Naive thymus-derived CD4-positive, alpha-beta T cell (primary cell): ENCODE measurements at regions of chr9 and their contacts with region 1.

Region 1: DNA sequence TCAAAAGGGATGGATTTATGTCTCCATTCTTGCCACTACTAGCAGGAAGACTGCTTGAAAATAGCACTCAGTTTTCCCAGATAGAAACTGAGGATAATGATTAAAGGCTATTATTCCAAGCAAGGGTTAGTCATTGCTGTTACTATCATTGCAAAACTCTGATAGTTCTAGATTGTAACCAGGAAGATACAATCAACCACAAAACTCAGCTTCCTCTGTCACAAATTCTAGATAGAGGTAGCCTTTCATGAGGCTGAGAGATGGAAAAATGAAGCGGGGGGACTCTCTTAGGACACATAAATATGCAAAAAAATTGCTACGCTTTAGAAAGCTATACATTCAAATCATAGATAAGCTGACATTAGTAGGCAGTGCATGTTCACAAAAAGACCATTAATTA is 3.1 kb downstream of the ANXA1 start:
- DNase-seq: peak in 7 of 9 donors; percentile 36 to 68 (median 54)
- ATAC-seq: peak; percentile 52
- H3K4me3 ChIP-seq: peak overlapping the region; percentile 67
- H3K4me3 Mint-ChIP-seq: peak overlapping the region; percentile 81 to 98 (median 90)
- H3K27ac ChIP-seq: peak overlapping the region; percentile 77
- H3K27ac Mint-ChIP-seq: peak overlapping the region; percentile 86 to 97 (median 96)
- H3K4me1 ChIP-seq: peaks cover 37 to 54% of the 10 kb centered on the region in 2 donors
- H3K4me1 Mint-ChIP-seq: peaks cover 47 to 96% (median 79%) of the 10 kb centered on the region in 7 donors
- H3K27me3 ChIP-seq: no peaks in the 10 kb centered on the region
- H3K27me3 Mint-ChIP-seq: peaks cover 0 to 2% (median 0%) of the 10 kb centered on the region in 5 donors

Region 2: DNA sequence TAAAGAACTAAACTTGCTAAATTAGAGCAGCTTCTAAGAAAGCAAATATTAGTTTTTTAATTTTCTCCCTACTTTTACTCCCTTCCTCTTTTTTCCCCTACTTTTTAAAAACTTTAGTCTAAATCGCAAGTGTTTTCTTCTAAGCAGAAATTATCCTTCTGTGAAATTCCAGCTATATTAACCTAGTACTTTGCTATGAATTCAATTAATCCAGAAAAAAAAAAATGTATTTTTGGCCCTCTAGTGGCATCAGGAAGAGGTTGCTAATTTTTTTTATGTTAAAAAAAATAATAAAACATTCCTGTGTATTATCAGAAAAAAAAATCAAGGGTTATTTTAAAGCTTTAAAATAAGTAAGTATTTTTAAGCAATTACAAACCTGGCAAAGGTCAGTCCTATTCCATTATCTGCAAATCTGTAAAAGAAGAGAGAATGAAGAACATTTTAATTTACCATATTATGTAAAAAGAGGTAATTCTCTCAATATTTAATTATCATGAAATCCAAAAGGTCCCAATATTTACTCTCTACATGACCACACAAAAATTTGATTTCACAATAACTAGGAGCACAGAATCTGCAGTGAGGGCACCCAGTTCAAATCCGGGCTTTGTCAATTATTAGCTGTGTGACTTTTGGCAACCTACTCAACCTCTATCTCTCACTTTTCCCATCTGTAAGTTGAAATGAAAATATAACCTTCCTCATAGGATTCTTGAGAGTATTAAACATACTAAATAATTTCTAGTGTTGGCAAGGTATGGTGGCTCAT is 1438.4 kb before region 1 on chr9:
- CTCF ChIA-PET with region 1: no interaction called
- POLR2A ChIA-PET with region 1: no interaction called
- intact Hi-C with region 1: no loop called
- DNase-seq: peak in 1 of 9 donors; percentile 10
- ATAC-seq: no peak
- H3K4me3 ChIP-seq: no peak overlapping the region
- H3K4me3 Mint-ChIP-seq: no peak overlapping the region
- H3K27ac ChIP-seq: no peak overlapping the region
- H3K27ac Mint-ChIP-seq: no peak overlapping the region
- H3K4me1 ChIP-seq: no peaks in the 10 kb centered on the region
- H3K4me1 Mint-ChIP-seq: peaks cover 9 to 19% (median 16%) of the 10 kb centered on the region in 7 donors
- H3K27me3 ChIP-seq: no peaks in the 10 kb centered on the region
- H3K27me3 Mint-ChIP-seq: no peaks in the 10 kb centered on the region

Region 3: DNA sequence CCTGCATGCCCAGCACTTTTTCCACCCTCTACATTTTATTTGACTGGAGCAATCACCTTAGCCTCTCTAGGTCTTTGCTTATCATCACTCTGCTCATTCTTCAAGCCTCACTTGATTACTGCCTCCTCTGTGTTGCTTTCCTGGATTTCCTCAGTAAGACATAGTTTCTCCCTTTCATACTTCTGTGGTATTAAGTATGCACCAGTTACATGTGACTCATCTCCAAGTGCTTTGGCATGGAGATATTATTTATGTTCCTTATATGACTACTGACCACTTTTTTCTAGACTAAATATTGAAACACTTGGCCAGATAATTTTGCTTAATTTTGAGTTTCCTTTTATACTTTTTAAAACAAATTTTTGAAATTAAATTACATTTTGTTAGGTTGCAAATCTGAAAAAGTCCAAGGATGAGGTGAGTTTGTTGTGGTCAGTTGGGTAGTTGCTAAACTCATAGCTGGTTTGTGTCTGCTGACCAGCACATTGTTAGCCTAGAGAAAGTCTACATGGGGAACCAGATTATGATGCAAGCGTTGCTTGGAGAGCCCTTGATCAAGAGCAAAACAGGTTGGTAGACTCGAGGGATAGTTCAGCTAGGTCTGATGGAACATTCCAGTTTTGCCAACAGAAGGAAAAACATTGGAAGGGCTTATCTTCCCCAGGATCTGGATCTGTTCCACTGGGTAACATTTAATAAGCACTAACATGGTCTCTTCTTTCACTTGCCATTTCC is 493.2 kb before region 1 on chr9:
- CTCF ChIA-PET with region 1: no interaction called
- POLR2A ChIA-PET with region 1: no interaction called
- intact Hi-C with region 1: no loop called
- DNase-seq: no peak
- ATAC-seq: no peak
- H3K4me3 ChIP-seq: no peak overlapping the region
- H3K4me3 Mint-ChIP-seq: no peak overlapping the region
- H3K27ac ChIP-seq: no peak overlapping the region
- H3K27ac Mint-ChIP-seq: no peak overlapping the region
- H3K4me1 ChIP-seq: no peaks in the 10 kb centered on the region
- H3K4me1 Mint-ChIP-seq: no peaks in the 10 kb centered on the region
- H3K27me3 ChIP-seq: no peaks in the 10 kb centered on the region
- H3K27me3 Mint-ChIP-seq: peaks cover 9 to 32% (median 20%) of the 10 kb centered on the region in 5 donors

Region 4: DNA sequence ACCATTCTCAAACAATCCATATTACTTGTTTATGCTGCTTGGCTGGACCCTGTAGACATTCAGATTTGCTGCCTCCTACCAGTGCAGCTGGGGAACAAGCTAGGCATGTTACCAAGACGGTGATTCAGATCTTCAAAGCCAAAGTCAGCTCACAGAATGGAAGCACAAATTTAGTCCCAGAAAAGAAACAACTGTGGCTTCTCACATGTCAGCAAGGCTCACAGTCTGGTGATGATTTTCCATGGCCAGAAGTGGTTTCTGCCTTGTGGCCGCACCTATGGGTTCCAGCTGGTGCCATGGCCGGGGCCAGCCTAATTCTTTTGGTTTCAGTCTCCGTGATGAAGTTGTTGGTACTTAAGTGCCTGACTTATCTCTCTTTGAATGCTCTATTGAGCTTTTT is 451.2 kb before region 1 on chr9:
- CTCF ChIA-PET with region 1: no interaction called
- POLR2A ChIA-PET with region 1: no interaction called
- intact Hi-C with region 1: no loop called
- DNase-seq: no peak
- ATAC-seq: no peak
- H3K4me3 ChIP-seq: no peak overlapping the region
- H3K4me3 Mint-ChIP-seq: no peak overlapping the region
- H3K27ac ChIP-seq: no peak overlapping the region
- H3K27ac Mint-ChIP-seq: no peak overlapping the region
- H3K4me1 ChIP-seq: no peaks in the 10 kb centered on the region
- H3K4me1 Mint-ChIP-seq: peaks cover 0 to 1% (median 0%) of the 10 kb centered on the region in 7 donors
- H3K27me3 ChIP-seq: no peaks in the 10 kb centered on the region
- H3K27me3 Mint-ChIP-seq: peaks cover 0 to 6% (median 0%) of the 10 kb centered on the region in 5 donors

Region 5: GRCh38 chr9:73093740-73094379 is 60.9 kb before region 1 on chr9:
- CTCF ChIA-PET with region 1: no interaction called
- POLR2A ChIA-PET with region 1: no interaction called
- intact Hi-C with region 1: no loop called
- DNase-seq: no peak
- ATAC-seq: no peak
- H3K4me3 ChIP-seq: no peak overlapping the region
- H3K4me3 Mint-ChIP-seq: peak overlapping the region in 8 of 10 donors; percentile 1 to 82 (median 60)
- H3K27ac ChIP-seq: no peak overlapping the region
- H3K27ac Mint-ChIP-seq: peak overlapping the region in 2 of 9 donors; percentile 5
- H3K4me1 ChIP-seq: no peaks in the 10 kb centered on the region
- H3K4me1 Mint-ChIP-seq: peaks cover 0 to 6% (median 5%) of the 10 kb centered on the region in 7 donors
- H3K27me3 ChIP-seq: no peaks in the 10 kb centered on the region
- H3K27me3 Mint-ChIP-seq: peaks cover 0 to 14% (median 0%) of the 10 kb centered on the region in 5 donors

Region 6: GRCh38 chr9:73104342-73104741 is 50.4 kb before region 1 on chr9:
- CTCF ChIA-PET with region 1: interaction called, 7 read pairs
- POLR2A ChIA-PET with region 1: no interaction called
- intact Hi-C with region 1: loop called (anchors 1 kb)
- DNase-seq: no peak
- ATAC-seq: peak; percentile 37
- H3K4me3 ChIP-seq: no peak overlapping the region
- H3K4me3 Mint-ChIP-seq: no peak overlapping the region
- H3K27ac ChIP-seq: no peak overlapping the region
- H3K27ac Mint-ChIP-seq: no peak overlapping the region
- H3K4me1 ChIP-seq: no peaks in the 10 kb centered on the region
- H3K4me1 Mint-ChIP-seq: peaks cover 0 to 3% (median 0%) of the 10 kb centered on the region in 7 donors
- H3K27me3 ChIP-seq: no peaks in the 10 kb centered on the region
- H3K27me3 Mint-ChIP-seq: peaks cover 0 to 23% (median 0%) of the 10 kb centered on the region in 5 donors

Region 7: DNA sequence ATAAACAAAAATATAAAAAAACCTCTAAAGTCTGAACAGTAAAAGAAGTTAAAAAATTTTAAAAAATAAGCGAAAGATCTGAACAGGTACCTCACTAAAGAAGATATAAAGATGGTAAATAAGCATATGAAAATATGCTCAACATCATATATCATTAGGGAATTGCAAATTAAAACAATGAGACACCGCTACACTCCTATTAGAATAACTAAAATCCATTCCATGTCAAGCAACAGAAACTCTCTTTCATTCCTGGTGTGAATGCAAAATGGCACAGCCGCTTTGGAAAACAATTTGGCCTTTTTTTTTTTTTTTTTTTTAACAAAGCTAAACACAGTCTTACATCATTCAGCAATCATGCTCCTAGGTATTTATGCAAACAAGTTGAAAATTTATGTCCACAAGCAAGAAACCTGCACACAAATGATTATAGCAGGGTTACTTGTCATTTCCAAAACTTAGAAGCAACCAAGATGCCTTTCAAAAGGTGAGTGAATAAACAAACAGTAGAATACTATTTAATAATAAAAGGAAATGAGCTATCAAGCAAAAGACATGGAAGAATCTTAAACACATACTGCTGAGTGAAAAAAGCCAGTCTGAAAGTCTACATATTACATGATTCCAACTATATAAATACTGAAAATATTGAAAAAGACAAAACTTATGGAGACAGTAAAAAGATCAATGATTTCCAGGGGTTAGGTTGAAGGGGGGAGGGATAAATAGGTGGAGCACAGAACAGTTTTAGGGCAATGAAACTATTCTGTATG is 19.0 kb after region 1 on chr9:
- CTCF ChIA-PET with region 1: interaction called, 5 read pairs
- POLR2A ChIA-PET with region 1: no interaction called
- intact Hi-C with region 1: loop called (anchors 2 kb)
- DNase-seq: no peak
- ATAC-seq: no peak
- H3K4me3 ChIP-seq: no peak overlapping the region
- H3K4me3 Mint-ChIP-seq: no peak overlapping the region
- H3K27ac ChIP-seq: no peak overlapping the region
- H3K27ac Mint-ChIP-seq: peak overlapping the region in 2 of 9 donors; percentile 37 to 39
- H3K4me1 ChIP-seq: no peaks in the 10 kb centered on the region
- H3K4me1 Mint-ChIP-seq: peaks cover 0 to 9% (median 0%) of the 10 kb centered on the region in 7 donors
- H3K27me3 ChIP-seq: no peaks in the 10 kb centered on the region
- H3K27me3 Mint-ChIP-seq: no peaks in the 10 kb centered on the region